Activated naive CD4-positive, alpha-beta T cell treated with anti-CD3 and anti-CD28 coated beads for 36 hours (primary cell): ENCODE measurements at regions of chr6 and their contacts with region 1.

Region 1: DNA sequence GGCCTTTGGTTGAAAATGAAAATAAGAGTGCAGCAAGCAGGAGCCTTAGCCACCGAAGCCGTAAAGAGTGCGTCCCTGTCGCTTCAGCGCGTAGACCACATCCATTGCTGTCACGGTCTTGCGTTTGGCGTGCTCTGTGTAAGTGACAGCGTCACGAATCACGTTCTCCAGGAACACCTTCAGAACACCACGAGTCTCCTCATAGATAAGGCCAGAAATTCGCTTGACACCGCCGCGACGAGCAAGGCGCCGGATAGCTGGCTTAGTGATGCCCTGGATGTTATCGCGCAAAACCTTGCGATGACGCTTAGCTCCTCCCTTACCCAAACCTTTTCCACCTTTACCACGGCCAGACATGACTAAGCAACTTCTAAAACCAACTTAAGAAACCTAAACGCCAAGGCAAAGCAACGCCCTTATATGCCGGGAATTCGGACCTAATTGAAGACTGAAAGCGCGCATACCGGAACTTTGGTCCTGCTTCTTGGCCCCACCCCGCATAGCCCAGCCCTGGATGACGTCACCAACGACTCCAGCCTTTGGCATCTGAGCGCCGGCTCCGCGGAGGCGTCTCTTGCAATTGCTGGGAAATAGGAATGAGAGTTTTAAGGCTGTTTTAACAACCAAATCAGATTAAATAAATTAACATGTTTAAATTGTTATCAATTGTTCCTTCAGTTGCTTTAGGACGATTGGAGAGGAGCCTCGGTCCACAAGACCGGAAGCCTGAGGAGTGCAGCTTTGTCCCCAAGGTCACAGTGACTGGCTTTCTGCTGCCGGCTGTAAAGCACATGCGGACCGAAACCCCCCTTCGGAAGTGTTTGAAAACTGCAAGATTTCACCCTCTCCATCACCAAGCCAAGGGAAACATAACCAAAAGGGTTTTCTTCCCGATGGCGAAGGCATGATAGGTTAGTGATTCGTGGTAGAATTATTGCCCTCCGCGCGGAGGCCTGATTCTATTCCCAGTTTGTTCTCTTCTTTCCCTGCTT is 79.6 kb upstream of the BTN3A2 start:
- DNase-seq: peak; percentile 99
- H3K4me3 Mint-ChIP-seq: peak overlapping the region; percentile 93
- H3K27ac Mint-ChIP-seq: peak overlapping the region; percentile 100
- H3K4me1 Mint-ChIP-seq: peaks cover 16% of the 10 kb centered on the region
- H3K27me3 Mint-ChIP-seq: peaks cover 3% of the 10 kb centered on the region

Region 2: DNA sequence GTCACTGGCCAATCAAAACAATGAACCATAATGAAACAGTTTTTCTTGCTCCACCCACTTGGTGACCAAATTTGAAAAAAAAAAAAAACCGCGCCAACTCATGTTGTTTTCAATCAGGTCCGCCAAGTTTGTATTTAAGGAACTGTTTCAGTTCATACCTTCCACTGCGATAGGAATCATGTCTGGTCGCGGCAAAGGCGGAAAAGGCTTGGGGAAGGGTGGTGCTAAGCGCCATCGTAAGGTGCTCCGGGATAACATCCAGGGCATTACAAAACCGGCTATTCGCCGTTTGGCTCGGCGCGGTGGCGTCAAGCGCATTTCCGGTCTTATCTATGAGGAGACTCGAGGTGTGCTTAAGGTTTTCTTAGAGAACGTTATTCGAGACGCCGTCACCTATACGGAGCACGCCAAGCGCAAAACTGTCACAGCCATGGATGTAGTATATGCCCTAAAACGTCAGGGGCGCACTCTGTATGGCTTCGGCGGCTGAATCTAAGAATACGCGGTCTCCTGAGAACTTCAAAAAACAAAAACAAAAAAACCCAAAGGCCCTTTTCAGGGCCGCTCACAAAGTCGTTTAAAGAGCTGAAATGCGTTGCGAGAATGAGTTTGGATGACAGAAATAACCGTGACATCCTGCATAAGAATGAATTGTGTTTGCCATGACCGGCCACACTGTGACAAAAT is 181.5 kb before region 1 on chr6:
- CTCF ChIA-PET with region 1: no interaction called
- intact Hi-C with region 1: loop called (anchors 1 kb)
- DNase-seq: peak; percentile 87
- H3K4me3 Mint-ChIP-seq: peak overlapping the region; percentile 80
- H3K27ac Mint-ChIP-seq: peak overlapping the region; percentile 94
- H3K4me1 Mint-ChIP-seq: peaks cover 18% of the 10 kb centered on the region
- H3K27me3 Mint-ChIP-seq: peaks cover 2% of the 10 kb centered on the region

Region 3: GRCh38 chr6:26234421-26235296 is 50.8 kb before region 1 on chr6:
- CTCF ChIA-PET with region 1: no interaction called
- intact Hi-C with region 1: loop called (anchors 1 kb)
- DNase-seq: peak; percentile 90
- H3K4me3 Mint-ChIP-seq: peak overlapping the region; percentile 83
- H3K27ac Mint-ChIP-seq: peak overlapping the region; percentile 100
- H3K4me1 Mint-ChIP-seq: peaks cover 28% of the 10 kb centered on the region
- H3K27me3 Mint-ChIP-seq: peaks cover 3% of the 10 kb centered on the region

Region 4: DNA sequence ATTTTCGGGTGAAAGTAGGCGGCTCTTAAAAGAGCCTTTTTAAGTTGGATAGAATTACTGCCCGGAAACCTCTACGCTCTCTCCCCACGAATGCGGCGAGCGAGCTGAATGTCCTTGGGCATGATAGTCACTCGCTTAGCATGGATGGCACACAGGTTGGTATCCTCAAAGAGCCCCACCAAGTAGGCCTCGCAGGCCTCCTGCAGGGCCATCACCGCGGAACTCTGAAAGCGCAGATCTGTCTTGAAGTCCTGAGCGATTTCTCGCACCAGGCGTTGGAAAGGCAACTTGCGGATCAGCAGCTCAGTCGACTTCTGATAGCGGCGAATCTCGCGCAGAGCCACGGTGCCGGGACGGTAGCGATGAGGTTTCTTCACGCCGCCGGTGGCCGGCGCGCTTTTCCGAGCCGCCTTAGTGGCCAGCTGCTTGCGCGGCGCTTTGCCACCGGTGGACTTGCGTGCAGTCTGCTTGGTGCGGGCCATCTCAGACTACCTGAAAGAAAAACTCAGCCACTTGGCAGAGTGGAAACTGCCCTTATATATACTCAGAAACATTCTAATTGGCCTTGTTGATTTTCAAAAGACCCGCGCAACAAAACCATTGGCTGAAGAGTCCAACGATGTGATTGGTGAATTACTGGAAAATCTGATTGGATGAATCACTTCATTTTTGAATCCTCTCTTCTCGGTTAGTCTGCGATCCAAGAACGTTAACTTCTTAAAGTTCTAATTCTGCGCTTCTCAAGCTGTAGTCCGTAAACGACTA is 14.4 kb before region 1 on chr6:
- CTCF ChIA-PET with region 1: no interaction called
- intact Hi-C with region 1: loop called (anchors 1 kb)
- DNase-seq: peak; percentile 92
- H3K4me3 Mint-ChIP-seq: no peak overlapping the region
- H3K27ac Mint-ChIP-seq: no peak overlapping the region
- H3K4me1 Mint-ChIP-seq: peaks cover 9% of the 10 kb centered on the region
- H3K27me3 Mint-ChIP-seq: peaks cover 5% of the 10 kb centered on the region

Region 5: GRCh38 chr6:26322645-26323482 is 37.4 kb after region 1 on chr6:
- CTCF ChIA-PET with region 1: no interaction called
- intact Hi-C with region 1: loop called (anchors 2 kb)
- DNase-seq: peak; percentile 74
- H3K4me3 Mint-ChIP-seq: peak overlapping the region; percentile 83
- H3K27ac Mint-ChIP-seq: peak overlapping the region; percentile 89
- H3K4me1 Mint-ChIP-seq: peaks cover 30% of the 10 kb centered on the region
- H3K27me3 Mint-ChIP-seq: peaks cover 30% of the 10 kb centered on the region

Region 6: GRCh38 chr6:26596579-26597388 is 311.3 kb after region 1 on chr6 and contains the start of gene ABT1:
- CTCF ChIA-PET with region 1: no interaction called
- intact Hi-C with region 1: loop called (anchors 1 kb)
- DNase-seq: peak; percentile 99
- H3K4me3 Mint-ChIP-seq: no peak within 1 kb of the TSS
- H3K27ac Mint-ChIP-seq: no peak within 1 kb of the TSS
- H3K4me1 Mint-ChIP-seq: peaks cover 53% of the 10 kb centered on the region
- H3K27me3 Mint-ChIP-seq: peaks cover 24% of the 10 kb centered on the region
- total RNA-seq, gene ABT1: 17.3 to 18.4 TPM